OCI-LY7 (cell line): ENCODE measurements at regions of chr5 and their contacts with region 1.

Region 1: GRCh38 chr5:124741711-124742496 is 4.5 kb downstream of the ZNF608 start:
- DNase-seq: peak; percentile 44
- H3K4me3 ChIP-seq: peak overlapping the region; percentile 85
- H3K27ac ChIP-seq: peak overlapping the region; percentile 97
- H3K4me1 ChIP-seq: peaks cover 52% of the 10 kb centered on the region
- CTCF ChIP-seq: no peak

Region 2: DNA sequence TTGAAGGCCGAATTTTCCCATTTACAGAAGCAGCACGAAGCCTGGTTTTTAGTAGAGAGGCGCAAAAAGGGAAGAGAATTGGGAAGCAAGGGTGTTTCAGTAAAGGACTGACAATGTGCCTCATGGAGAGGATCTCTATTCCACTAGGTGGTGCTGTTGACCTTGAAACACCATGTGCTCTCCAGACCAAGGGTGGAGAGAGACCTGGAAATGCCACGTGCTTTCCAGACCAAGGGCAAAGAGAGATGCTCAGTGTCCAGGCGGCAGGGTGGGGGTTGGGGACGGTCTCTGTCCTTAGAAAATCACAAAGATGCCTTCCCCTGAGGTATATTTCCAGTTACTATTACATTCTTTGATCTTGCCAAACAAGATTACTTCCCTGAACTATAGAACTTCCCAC is 804.7 kb before region 1 on chr5:
- CTCF ChIA-PET with region 1: no interaction called
- POLR2A ChIA-PET with region 1: no interaction called
- intact Hi-C with region 1: loop called (anchors 5 kb)
- DNase-seq: peak; percentile 77
- H3K4me3 ChIP-seq: no peak overlapping the region
- H3K27ac ChIP-seq: no peak overlapping the region
- H3K4me1 ChIP-seq: no peaks in the 10 kb centered on the region
- CTCF ChIP-seq: peak; percentile 84

Region 3: GRCh38 chr5:124034963-124035362 is 706.9 kb before region 1 on chr5:
- CTCF ChIA-PET with region 1: no interaction called
- POLR2A ChIA-PET with region 1: interaction called, 4 read pairs
- intact Hi-C with region 1: loop called (anchors 5 kb)
- DNase-seq: peak; percentile 90
- H3K4me3 ChIP-seq: peak overlapping the region; percentile 46
- H3K27ac ChIP-seq: peak overlapping the region; percentile 92
- H3K4me1 ChIP-seq: peaks cover 49% of the 10 kb centered on the region
- CTCF ChIP-seq: no peak

Region 4: DNA sequence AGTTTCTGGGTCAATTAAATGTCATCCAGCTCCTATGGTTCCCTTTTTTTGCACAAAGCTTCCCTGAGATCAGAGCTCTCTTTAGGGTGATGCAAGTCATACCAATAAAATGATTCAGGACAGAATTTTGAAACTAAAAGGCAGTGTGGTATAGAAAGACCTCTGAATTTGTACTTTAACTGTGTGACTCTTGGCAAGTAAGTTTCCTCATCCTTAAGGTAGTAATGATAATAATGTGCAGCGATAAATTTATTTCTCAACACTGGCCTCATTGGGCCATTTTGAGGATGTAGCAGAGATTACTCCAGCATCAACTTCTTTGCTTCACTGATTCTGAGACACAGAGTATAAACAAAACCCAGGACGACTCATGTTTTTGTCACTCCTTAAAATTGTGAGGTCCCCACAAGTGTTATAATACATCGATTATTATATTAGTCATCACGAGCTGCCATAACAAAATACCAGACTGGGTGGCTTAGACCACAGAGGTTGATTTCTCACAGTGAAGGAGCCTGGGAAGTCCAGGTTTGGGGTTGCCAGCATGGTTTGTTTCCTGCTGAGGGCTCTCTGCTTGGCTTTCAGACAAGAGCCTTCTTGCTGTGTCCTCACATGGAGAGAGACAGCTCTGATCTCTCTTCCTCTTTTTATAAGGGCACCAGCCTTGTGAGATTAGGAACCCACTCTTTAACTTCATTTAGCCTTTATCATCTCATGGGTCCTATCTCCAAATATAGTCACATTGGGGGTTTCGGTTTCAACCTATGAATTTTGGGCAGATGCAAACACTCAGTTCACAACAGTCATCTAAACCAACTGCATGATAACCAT is 288.5 kb before region 1 on chr5:
- CTCF ChIA-PET with region 1: no interaction called
- POLR2A ChIA-PET with region 1: interaction called, 4 read pairs
- intact Hi-C with region 1: loop called (anchors 5 kb)
- DNase-seq: peak; percentile 91
- H3K4me3 ChIP-seq: peak overlapping the region; percentile 19
- H3K27ac ChIP-seq: peak overlapping the region; percentile 86
- H3K4me1 ChIP-seq: peaks cover 63% of the 10 kb centered on the region
- CTCF ChIP-seq: 0 out of 2 replicates have a peak, but pooled peaks have one; percentile 25

Region 5: GRCh38 chr5:124718380-124718789 is 23.5 kb before region 1 on chr5:
- CTCF ChIA-PET with region 1: interaction called, 3 read pairs
- POLR2A ChIA-PET with region 1: interaction called, 121 read pairs
- intact Hi-C with region 1: no loop called
- DNase-seq: no peak
- H3K4me3 ChIP-seq: peak overlapping the region; percentile 61
- H3K27ac ChIP-seq: peak overlapping the region; percentile 71
- H3K4me1 ChIP-seq: peaks cover 88% of the 10 kb centered on the region
- CTCF ChIP-seq: no peak

Region 6: DNA sequence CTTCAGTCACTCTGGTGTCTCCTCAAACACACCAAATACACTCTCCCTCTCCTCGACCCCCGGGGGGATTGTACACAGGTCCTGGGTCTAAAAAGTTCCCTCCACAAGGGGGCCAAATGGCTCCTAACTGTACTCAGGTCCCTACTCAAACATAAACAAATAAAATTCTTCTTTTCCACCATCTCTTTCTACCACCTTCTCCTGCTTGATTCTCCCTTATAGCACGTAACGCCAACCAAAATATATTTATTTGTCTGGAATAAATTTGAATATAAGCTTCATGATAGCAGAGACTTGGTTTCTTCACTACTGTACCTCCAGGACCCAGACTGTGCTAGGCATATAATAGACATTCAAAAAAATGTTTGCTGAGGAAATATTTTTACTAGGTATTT is 16.9 kb before region 1 on chr5:
- CTCF ChIA-PET with region 1: interaction called, 3 read pairs
- POLR2A ChIA-PET with region 1: interaction called, 121 read pairs
- intact Hi-C with region 1: no loop called
- DNase-seq: peak; percentile 83
- H3K4me3 ChIP-seq: peak overlapping the region; percentile 71
- H3K27ac ChIP-seq: peak overlapping the region; percentile 65
- H3K4me1 ChIP-seq: peaks cover 86% of the 10 kb centered on the region
- CTCF ChIP-seq: peak; percentile 85